IMR-90 (cell line): ENCODE measurements at regions of chr2 and their contacts with region 1.

Region 1: GRCh38 chr2:217189747-217190146 is 329.9 kb upstream of the TNP1 start:
- DNase-seq: no peak
- ATAC-seq: peak; percentile 63; the same call in 1 of the 2 replicates
- H3K4me3 ChIP-seq: no peak overlapping the region
- H3K27ac ChIP-seq: no peak overlapping the region
- H3K4me1 ChIP-seq: peaks cover 4% of the 10 kb centered on the region
- H3K27me3 ChIP-seq: no peaks in the 10 kb centered on the region
- CTCF ChIP-seq: no peak
- POLR2A ChIP-seq: no peak
- RAD21 ChIP-seq: no peak

Region 2: DNA sequence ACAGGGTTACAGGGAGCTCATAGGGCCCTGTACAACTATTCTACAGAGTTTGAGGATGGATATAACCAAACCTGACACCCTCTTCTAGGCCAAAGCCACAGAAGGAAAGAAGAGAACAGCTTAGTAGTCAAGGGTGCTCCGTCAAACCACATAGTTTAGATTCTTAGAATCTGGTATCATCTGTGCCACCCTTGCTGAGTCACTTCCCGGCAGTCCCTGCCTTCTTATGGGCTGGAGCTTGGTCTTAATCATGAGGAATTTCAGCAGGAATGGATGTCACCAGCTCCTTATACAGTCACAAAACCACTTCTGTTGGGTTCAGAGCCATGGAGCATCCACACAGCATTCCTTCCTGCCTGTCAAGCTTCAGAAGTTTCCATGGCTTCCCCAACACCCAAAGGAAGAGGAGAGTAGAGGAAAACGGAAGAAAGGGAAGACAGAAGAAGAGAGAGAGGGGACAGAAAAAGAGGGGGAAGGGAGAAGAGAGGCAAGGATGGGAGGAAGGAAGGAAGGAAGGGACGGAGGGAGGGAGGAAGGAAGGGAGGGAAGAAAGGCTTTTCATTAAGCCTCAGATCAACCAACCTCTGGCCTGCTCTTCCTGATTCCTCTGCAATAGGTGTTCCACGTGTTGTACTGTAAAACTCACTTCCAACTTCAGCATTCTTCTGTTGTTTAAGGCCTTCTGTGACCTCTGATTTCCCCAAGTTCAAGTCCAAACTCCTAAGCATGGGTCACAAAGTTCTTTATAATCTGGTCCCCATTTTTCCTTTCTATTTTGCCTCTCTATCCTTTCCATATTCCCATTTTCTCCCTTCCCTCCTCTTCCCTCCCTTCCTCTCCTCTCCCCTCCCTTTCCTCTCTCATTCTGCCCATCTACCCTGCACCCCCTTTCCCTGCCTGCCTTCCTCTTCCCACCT is 83.8 kb before region 1 on chr2:
- CTCF ChIA-PET with region 1: no interaction called
- POLR2A ChIA-PET with region 1: no interaction called
- dilution Hi-C with region 1: no loop called
- in situ Hi-C with region 1: no loop called
- intact Hi-C with region 1: no loop called
- DNase-seq: peak; percentile 95
- ATAC-seq: peak; percentile 86
- H3K4me3 ChIP-seq: no peak overlapping the region
- H3K27ac ChIP-seq: peak overlapping the region; percentile 99
- H3K4me1 ChIP-seq: peaks cover 23% of the 10 kb centered on the region
- H3K27me3 ChIP-seq: no peaks in the 10 kb centered on the region
- CTCF ChIP-seq: no peak
- POLR2A ChIP-seq: peak; percentile 68; the same call in 1 of the 2 replicates
- RAD21 ChIP-seq: peak; percentile 11; the same call in 1 of the 2 replicates

Region 3: DNA sequence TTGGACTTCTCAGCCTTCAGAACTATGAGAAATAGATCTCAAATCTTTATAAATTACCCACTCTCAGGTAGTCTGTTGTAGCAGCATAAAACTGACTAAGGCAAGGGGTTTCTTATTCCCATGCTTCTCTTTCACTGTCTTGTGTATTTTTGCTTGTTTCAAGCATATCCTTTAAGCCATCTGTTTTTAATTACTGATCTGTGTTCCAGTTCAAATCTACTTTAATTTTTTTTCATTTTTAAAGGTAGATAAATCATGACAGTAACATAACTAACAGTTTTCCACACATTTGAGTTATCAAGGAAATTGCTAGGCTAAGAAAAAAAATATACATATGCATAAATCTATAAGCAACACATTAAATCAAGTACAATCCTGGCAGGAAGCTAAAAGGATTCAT is 12.0 kb before region 1 on chr2:
- CTCF ChIA-PET with region 1: interaction called, 3 read pairs
- POLR2A ChIA-PET with region 1: no interaction called
- dilution Hi-C with region 1: no loop called
- in situ Hi-C with region 1: no loop called
- intact Hi-C with region 1: loop called (anchors 2 kb)
- DNase-seq: no peak
- ATAC-seq: no peak
- H3K4me3 ChIP-seq: no peak overlapping the region
- H3K27ac ChIP-seq: no peak overlapping the region
- H3K4me1 ChIP-seq: no peaks in the 10 kb centered on the region; the same call in 1 of the 2 replicates
- H3K27me3 ChIP-seq: no peaks in the 10 kb centered on the region
- CTCF ChIP-seq: no peak
- POLR2A ChIP-seq: no peak
- RAD21 ChIP-seq: no peak